Activated CD4-positive, alpha-beta memory T cell treated with anti-CD3 and anti-CD28 coated beads, Interleukin-2, amount 10 ng/mL, durations not matched to agents 7 days and 5 days (primary cell): ENCODE measurements at regions of chr16 and their contacts with region 1.

Region 1: GRCh38 chr16:79601931-79602627 is 1.5 kb upstream of the MAF start:
- DNase-seq: peak; percentile 92
- H3K4me3 Mint-ChIP-seq: peak overlapping the region; percentile 97
- H3K27ac Mint-ChIP-seq: peak overlapping the region; percentile 100
- H3K4me1 Mint-ChIP-seq: peaks cover 37% of the 10 kb centered on the region
- H3K27me3 Mint-ChIP-seq: no peaks in the 10 kb centered on the region

Region 2: GRCh38 chr16:78778101-78779004 is 823.7 kb before region 1 on chr16:
- CTCF ChIA-PET with region 1: interaction called, 7 read pairs
- POLR2A ChIA-PET with region 1: interaction called, 149 read pairs
- DNase-seq: peak; percentile 84
- H3K4me3 Mint-ChIP-seq: peak overlapping the region; percentile 58
- H3K27ac Mint-ChIP-seq: peak overlapping the region; percentile 98
- H3K4me1 Mint-ChIP-seq: peaks cover 95% of the 10 kb centered on the region
- H3K27me3 Mint-ChIP-seq: no peaks in the 10 kb centered on the region

Region 3: DNA sequence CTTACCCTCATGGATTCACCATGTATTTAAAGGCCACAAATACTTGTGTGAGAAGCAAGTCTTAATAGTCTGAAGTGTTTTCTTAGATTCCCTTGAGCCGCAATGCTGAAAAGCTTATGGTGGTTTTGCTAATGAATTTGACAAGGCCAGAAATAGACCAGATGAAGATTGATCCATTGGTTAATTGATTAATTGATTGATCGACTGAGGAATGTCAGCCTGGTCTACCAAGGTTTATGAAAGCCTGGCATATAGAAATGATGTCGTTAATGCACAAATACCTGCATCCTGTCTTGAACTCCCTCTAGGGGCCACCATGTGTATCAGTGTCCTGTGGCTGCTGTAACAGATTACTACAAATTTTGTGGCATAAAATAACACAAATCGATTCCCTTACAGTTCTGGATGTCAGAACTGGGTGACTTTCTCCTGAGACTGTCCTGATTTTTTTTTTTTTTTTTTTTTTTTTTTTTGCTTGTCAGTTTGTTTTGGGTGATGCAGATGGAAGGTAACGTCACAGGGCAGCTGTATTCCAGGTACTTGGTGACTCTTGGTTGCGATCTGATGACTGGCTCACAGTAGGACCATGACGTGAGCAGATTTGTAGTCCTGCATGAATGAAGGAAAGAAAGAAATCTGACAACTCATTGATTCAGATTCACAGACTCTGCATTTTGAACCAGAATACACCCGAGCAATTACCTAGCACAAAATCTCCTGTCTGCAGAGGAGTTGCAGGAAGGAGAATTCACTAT is 554.7 kb before region 1 on chr16:
- CTCF ChIA-PET with region 1: no interaction called
- POLR2A ChIA-PET with region 1: interaction called, 10 read pairs
- DNase-seq: peak; percentile 29
- H3K4me3 Mint-ChIP-seq: no peak overlapping the region
- H3K27ac Mint-ChIP-seq: no peak overlapping the region
- H3K4me1 Mint-ChIP-seq: peaks cover 39% of the 10 kb centered on the region
- H3K27me3 Mint-ChIP-seq: no peaks in the 10 kb centered on the region

Region 4: GRCh38 chr16:79278506-79278905 is 323.6 kb before region 1 on chr16:
- CTCF ChIA-PET with region 1: interaction called, 10 read pairs
- POLR2A ChIA-PET with region 1: interaction called, 67 read pairs
- DNase-seq: peak; percentile 85
- H3K4me3 Mint-ChIP-seq: peak overlapping the region; percentile 65
- H3K27ac Mint-ChIP-seq: peak overlapping the region; percentile 92
- H3K4me1 Mint-ChIP-seq: peaks cover 85% of the 10 kb centered on the region
- H3K27me3 Mint-ChIP-seq: no peaks in the 10 kb centered on the region

Region 5: DNA sequence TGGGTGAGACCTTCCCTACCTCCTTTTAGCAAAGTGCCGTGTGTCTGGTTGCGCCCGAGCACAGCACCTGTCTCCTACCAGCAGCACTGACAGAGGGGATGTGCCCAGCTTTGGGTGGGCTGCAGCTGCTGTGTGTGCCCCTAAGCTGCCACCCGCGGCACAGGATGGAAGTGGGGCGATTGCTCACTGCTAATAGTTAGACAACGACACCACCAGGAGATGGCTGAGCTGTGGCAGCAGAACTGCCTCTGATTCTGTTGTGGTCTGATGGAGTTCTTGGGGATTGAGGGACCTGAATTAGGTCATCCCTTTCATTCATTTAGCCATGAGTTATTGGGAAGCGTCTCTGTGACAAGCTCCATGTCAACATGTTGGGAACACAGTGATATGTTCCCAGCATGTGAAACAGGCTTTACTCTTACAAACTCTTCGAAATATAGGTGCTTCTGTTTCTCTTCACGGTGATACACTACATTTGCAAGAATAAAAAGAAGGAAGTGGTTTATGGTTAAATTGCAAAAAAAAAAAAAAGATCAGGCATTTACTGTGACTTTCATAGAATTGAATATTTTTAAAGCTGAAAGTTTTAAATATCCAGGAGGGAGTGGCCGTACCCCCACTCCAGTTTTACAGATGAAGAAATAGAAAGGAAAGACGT is 186.0 kb before region 1 on chr16:
- CTCF ChIA-PET with region 1: interaction called, 3 read pairs
- POLR2A ChIA-PET with region 1: interaction called, 29 read pairs
- DNase-seq: peak; percentile 37
- H3K4me3 Mint-ChIP-seq: peak overlapping the region; percentile 27
- H3K27ac Mint-ChIP-seq: peak overlapping the region; percentile 70
- H3K4me1 Mint-ChIP-seq: peaks cover 50% of the 10 kb centered on the region
- H3K27me3 Mint-ChIP-seq: no peaks in the 10 kb centered on the region

Region 6: GRCh38 chr16:79628501-79628975 is 26.5 kb after region 1 on chr16:
- CTCF ChIA-PET with region 1: interaction called, 7 read pairs
- POLR2A ChIA-PET with region 1: interaction called, 117 read pairs
- DNase-seq: peak; percentile 87
- H3K4me3 Mint-ChIP-seq: peak overlapping the region; percentile 17
- H3K27ac Mint-ChIP-seq: peak overlapping the region; percentile 59
- H3K4me1 Mint-ChIP-seq: peaks cover 85% of the 10 kb centered on the region
- H3K27me3 Mint-ChIP-seq: peaks cover 17% of the 10 kb centered on the region

Region 7: GRCh38 chr16:79770244-79771064 is 168.4 kb after region 1 on chr16:
- CTCF ChIA-PET with region 1: interaction called, 16 read pairs
- POLR2A ChIA-PET with region 1: interaction called, 68 read pairs
- DNase-seq: peak; percentile 84
- H3K4me3 Mint-ChIP-seq: peak overlapping the region; percentile 84
- H3K27ac Mint-ChIP-seq: peak overlapping the region; percentile 80
- H3K4me1 Mint-ChIP-seq: peaks cover 33% of the 10 kb centered on the region
- H3K27me3 Mint-ChIP-seq: peaks cover 11% of the 10 kb centered on the region